GM12878 (cell line): ENCODE measurements at regions of chr1 and their contacts with region 1.

Region 1: GRCh38 chr1:44571712-44572571 is 102.3 kb downstream of the TMEM53 start:
- DNase-seq: no peak
- ATAC-seq: peak; percentile 82
- H3K4me3 ChIP-seq: no peak overlapping the region
- H3K27ac ChIP-seq: no peak overlapping the region
- H3K4me1 ChIP-seq: no peaks in the 10 kb centered on the region
- H3K27me3 ChIP-seq: peaks cover 1 to 9% of the 10 kb centered on the region in 2 experiments; a peak in 2 of 4 replicates
- CTCF ChIP-seq: peak; percentile 53 to 61 (median 55)
- EP300 ChIP-seq: no peak
- POLR2A ChIP-seq: no peak
- RAD21 ChIP-seq: no peak

Region 2: GRCh38 chr1:44557778-44558177 is 14.2 kb before region 1 on chr1:
- CTCF ChIA-PET with region 1: interaction called, 19 read pairs
- POLR2A ChIA-PET with region 1: no interaction called
- RAD21 ChIA-PET with region 1: no interaction called
- SMC1A ChIA-PET with region 1: interaction called, 3 read pairs
- in situ Hi-C with region 1: no loop called
- intact Hi-C with region 1: no loop called
- DNase-seq: no peak
- ATAC-seq: no peak
- H3K4me3 ChIP-seq: no peak overlapping the region
- H3K27ac ChIP-seq: no peak overlapping the region
- H3K4me1 ChIP-seq: no peaks in the 10 kb centered on the region
- H3K27me3 ChIP-seq: peaks cover 5% of the 10 kb centered on the region in 2 experiments; a peak in 3 of 4 replicates
- CTCF ChIP-seq: no peak
- EP300 ChIP-seq: no peak
- POLR2A ChIP-seq: no peak
- RAD21 ChIP-seq: no peak

Region 3: DNA sequence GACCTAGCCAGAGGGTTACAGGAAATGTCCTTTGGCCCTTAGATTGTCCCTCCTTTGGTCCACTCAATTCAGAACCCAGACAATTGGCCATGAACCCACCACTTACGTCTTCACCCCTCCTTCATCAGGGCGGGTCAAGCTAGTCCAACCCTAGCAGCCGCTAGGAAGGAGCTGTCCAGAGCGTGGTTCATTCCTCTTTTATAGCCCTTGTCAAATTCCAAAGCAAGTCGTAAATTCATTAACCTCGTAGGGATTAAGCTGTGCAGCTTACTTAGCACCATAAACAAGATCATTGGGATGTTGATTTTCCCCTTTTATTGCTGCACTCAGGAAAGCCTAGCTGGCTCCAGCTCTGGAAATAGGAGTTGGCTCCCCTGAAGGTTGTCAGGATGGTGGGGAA is 12.2 kb after region 1 on chr1:
- CTCF ChIA-PET with region 1: interaction called, 10 read pairs
- POLR2A ChIA-PET with region 1: no interaction called
- RAD21 ChIA-PET with region 1: no interaction called
- SMC1A ChIA-PET with region 1: interaction called, 3 read pairs
- in situ Hi-C with region 1: no loop called
- intact Hi-C with region 1: no loop called
- DNase-seq: no peak
- ATAC-seq: no peak
- H3K4me3 ChIP-seq: no peak overlapping the region
- H3K27ac ChIP-seq: no peak overlapping the region
- H3K4me1 ChIP-seq: no peaks in the 10 kb centered on the region
- H3K27me3 ChIP-seq: peaks cover 0 to 3% of the 10 kb centered on the region in 2 experiments; a peak in 2 of 4 replicates
- CTCF ChIP-seq: no peak
- EP300 ChIP-seq: no peak
- POLR2A ChIP-seq: no peak
- RAD21 ChIP-seq: no peak

Region 4: GRCh38 chr1:44609412-44609767 is 37.4 kb after region 1 on chr1:
- CTCF ChIA-PET with region 1: interaction called, 11 read pairs
- POLR2A ChIA-PET with region 1: no interaction called
- RAD21 ChIA-PET with region 1: no interaction called
- SMC1A ChIA-PET with region 1: no interaction called
- in situ Hi-C with region 1: no loop called
- intact Hi-C with region 1: no loop called
- DNase-seq: no peak
- ATAC-seq: peak; percentile 87
- H3K4me3 ChIP-seq: no peak overlapping the region
- H3K27ac ChIP-seq: no peak overlapping the region
- H3K4me1 ChIP-seq: no peaks in the 10 kb centered on the region
- H3K27me3 ChIP-seq: peaks cover 0 to 1% of the 10 kb centered on the region in 2 experiments; a peak in 2 of 4 replicates
- CTCF ChIP-seq: peak; percentile 50 to 59 (median 56)
- EP300 ChIP-seq: no peak
- POLR2A ChIP-seq: no peak
- RAD21 ChIP-seq: peak; percentile 61